Activated CD4-positive, alpha-beta T cell treated with anti-CD3 and anti-CD28 coated beads for 36 hours (primary cell): ENCODE measurements at regions of chr10 and their contacts with region 1.

Region 1: DNA sequence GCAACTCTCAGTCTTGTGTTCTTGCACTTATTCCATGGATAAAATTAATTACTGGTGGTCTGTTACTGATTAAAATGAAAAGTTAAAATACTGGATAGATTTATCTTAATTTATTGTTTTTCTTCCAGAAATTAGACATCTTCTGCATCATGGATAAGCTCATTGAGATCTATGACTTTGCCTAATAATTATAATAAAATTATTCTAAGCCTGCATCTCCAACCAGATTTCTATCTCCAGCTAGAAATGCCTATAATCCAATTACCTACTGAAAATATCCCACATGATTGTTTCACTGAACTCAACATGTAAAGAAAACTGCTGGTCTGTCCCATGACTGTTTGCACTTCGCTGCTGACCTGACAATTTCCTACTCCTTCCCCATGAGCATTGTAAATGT is 88.3 kb upstream of the ACBD5 start:
- DNase-seq: no peak
- ATAC-seq: no peak
- H3K4me3 Mint-ChIP-seq: no peak overlapping the region
- H3K27ac Mint-ChIP-seq: no peak overlapping the region
- H3K4me1 Mint-ChIP-seq: no peaks in the 10 kb centered on the region
- H3K27me3 Mint-ChIP-seq: peaks cover 2% of the 10 kb centered on the region

Region 2: GRCh38 chr10:27345455-27345920 is 16.5 kb after region 1 on chr10:
- CTCF ChIA-PET with region 1: interaction called, 5 read pairs
- POLR2A ChIA-PET with region 1: no interaction called
- intact Hi-C with region 1: loop called in 1 of 2 experiments (anchors 1 kb)
- DNase-seq: no peak
- ATAC-seq: peak; percentile 41
- H3K4me3 Mint-ChIP-seq: peak overlapping the region; percentile 18
- H3K27ac Mint-ChIP-seq: peak overlapping the region; percentile 90
- H3K4me1 Mint-ChIP-seq: peaks cover 29% of the 10 kb centered on the region
- H3K27me3 Mint-ChIP-seq: peaks cover 16% of the 10 kb centered on the region